GM10248 (cell line): ENCODE measurements at regions of chr17 and their contacts with region 1.

Region 1: DNA sequence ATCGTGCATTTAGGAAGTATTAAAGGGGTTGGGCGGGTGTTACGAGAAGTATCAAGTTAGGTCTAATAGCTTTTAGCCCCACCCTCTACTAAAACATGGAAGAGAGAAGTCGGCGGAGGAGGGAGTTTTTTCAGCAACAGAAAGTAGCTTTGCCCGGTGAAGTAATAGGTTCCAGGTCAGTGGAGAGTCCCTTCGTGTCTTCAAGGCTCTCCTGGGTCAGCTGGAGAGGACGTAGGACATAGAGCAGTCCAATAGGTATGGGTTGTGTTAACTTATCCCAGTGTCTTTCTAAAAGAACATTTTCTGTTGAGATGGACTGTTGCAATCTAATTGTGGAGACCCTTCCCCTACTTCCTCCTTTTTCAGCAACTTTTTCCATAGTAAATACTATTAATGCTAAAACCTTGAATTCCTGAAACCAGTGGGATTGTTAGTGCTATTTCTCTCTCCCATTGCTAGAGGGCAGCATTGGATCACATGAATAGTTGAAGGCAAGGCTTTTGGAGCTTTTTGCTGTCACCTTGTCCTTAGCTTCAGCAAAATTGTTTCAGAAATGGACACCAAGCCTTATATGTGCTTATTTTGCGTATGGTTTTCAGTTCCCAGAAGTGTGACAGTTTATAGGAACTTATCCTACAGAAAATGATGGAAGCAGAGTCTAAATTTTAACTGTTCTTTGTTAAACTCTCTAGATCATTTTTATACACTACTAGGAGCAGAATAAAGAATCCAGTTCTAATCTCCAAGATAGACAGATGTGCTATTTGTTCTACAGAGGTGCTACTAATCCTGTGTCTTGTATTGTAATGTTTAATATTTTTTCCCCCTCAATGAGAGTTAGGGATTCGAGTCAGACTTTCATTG is 38.4 kb downstream of the UTP18 start:
- DNase-seq: peak; percentile 18
- CTCF ChIP-seq: peak; percentile 51

Region 2: GRCh38 chr17:51275381-51275780 is 23.4 kb before region 1 on chr17:
- CTCF ChIA-PET with region 1: interaction called, 16 read pairs
- POLR2A ChIA-PET with region 1: interaction called, 3 read pairs
- DNase-seq: no peak
- CTCF ChIP-seq: no peak

Region 3: GRCh38 chr17:51287412-51287811 is 11.3 kb before region 1 on chr17:
- CTCF ChIA-PET with region 1: interaction called, 16 read pairs
- POLR2A ChIA-PET with region 1: no interaction called
- DNase-seq: no peak
- CTCF ChIP-seq: no peak

Region 4: DNA sequence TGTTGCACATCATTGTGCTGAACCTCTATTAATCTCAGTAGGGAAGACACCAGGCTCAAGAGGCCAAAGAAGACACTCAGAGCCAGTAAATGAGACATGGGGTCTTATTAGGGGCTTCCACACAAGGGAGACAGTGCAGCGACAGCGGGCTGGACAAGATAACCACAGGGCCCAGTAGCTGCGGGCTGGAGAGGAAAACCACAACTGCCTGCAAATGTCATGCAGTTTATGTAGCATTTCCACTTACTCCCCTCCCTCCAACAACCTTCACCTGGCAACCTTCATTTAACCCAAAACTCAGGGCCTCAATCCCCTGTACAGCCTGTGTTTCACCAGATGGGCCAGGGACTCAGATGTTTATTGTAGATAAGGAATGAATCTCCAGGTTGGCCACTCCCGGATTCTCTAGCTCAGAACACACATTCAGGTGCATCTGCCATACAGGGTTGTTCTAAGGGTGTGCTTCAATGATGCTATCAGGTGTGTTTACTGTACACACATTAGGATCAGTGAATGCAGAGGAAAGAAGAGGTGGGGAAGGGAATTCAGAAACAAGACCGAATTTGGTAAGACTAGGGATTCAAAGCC is 147.3 kb after region 1 on chr17:
- CTCF ChIA-PET with region 1: no interaction called
- POLR2A ChIA-PET with region 1: no interaction called
- DNase-seq: no peak
- CTCF ChIP-seq: no peak

Region 5: GRCh38 chr17:51537996-51538550 is 239.3 kb after region 1 on chr17:
- CTCF ChIA-PET with region 1: interaction called, 13 read pairs
- POLR2A ChIA-PET with region 1: no interaction called
- DNase-seq: no peak
- CTCF ChIP-seq: no peak

Region 6: GRCh38 chr17:51718953-51719352 is 420.2 kb after region 1 on chr17:
- CTCF ChIA-PET with region 1: no interaction called
- POLR2A ChIA-PET with region 1: no interaction called
- DNase-seq: no peak
- CTCF ChIP-seq: no peak